ENCODE measurements at regions of chr12 and their contacts with region 1.

Region 1: GRCh38 chr12:53352331-53353256 is 16.4 kb upstream of the SP7 start:
- DNase-seq: peak; percentile 58 to 87 (median 82)
- ATAC-seq: peak; percentile 99
- H3K4me3 ChIP-seq: no peak overlapping the region
- H3K4me3 Mint-ChIP-seq: peak overlapping the region in 2 of 10 donors; percentile 14 to 32
- H3K27ac ChIP-seq: no peak overlapping the region
- H3K27ac Mint-ChIP-seq: peak overlapping the region in 6 of 9 donors; percentile 4 to 52 (median 12)
- H3K4me1 ChIP-seq: peaks cover 0 to 3% of the 10 kb centered on the region in 2 donors
- H3K4me1 Mint-ChIP-seq: peaks cover 5 to 13% (median 6%) of the 10 kb centered on the region in 7 donors
- H3K27me3 ChIP-seq: no peaks in the 10 kb centered on the region
- H3K27me3 Mint-ChIP-seq: no peaks in the 10 kb centered on the region

Region 2: DNA sequence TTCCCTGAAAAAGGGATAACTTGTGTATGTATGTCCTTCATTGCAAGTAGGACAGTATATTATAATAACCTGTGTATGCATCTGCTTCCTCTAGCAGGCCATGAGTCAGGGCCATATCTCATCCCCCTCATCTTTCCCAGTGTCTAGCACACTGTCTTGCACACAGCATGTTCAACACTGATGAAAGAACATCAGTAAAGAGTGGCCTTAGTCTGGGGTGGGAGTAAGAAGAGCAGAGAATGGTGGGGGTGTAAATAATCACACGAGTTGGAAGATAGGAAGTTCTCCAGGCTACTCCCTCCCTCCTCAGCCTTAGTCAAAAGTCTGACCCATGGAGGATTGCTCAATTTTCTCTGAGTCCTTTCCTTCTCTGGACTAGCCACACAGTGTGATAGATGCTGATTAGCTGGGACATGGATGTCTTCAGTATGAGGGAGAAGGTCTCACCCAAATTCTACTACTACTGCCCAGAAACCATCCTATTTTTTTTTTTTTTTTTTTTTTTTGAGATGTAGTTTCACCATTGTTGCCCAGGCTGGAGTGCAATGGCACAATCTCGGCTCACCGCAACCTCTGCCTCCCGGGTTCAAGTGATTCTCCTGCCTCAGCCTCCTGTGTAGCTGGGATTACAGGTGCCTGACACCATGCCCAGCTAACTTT is 12.8 kb after region 1 on chr12:
- CTCF ChIA-PET with region 1: interaction called, 10 read pairs
- POLR2A ChIA-PET with region 1: interaction called, 3 read pairs
- intact Hi-C with region 1: no loop called
- DNase-seq: no peak
- ATAC-seq: peak; percentile 75
- H3K4me3 ChIP-seq: no peak overlapping the region
- H3K4me3 Mint-ChIP-seq: peak overlapping the region in 4 of 10 donors; percentile 0 to 63 (median 34)
- H3K27ac ChIP-seq: no peak overlapping the region
- H3K27ac Mint-ChIP-seq: peak overlapping the region in 7 of 9 donors; percentile 56 to 91 (median 88)
- H3K4me1 ChIP-seq: peaks cover 2 to 3% of the 10 kb centered on the region in 2 donors
- H3K4me1 Mint-ChIP-seq: peaks cover 10 to 17% (median 15%) of the 10 kb centered on the region in 7 donors
- H3K27me3 ChIP-seq: no peaks in the 10 kb centered on the region
- H3K27me3 Mint-ChIP-seq: no peaks in the 10 kb centered on the region

Region 3: DNA sequence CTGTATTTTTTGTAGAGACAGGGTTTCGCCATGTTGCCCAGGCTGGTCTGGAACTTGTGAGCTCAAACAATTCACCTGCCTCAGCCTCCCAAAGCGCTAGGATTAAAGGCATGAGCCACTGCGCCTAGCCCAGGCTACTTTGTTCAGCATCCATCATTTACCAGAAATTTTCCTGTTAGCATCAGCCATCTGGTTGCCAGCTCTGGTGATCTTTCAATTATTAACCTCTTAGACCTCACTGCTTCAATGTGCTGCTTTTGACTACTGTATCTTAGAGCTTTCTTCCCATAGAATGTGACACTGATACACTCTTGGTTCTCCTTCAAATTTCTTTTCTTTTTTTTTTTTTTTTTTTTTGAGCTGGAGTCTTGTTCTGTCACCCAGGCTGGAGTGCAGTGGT is 65.6 kb after region 1 on chr12:
- CTCF ChIA-PET with region 1: interaction called, 75 read pairs
- POLR2A ChIA-PET with region 1: interaction called, 4 read pairs
- intact Hi-C with region 1: loop called (anchors 1 kb)
- DNase-seq: no peak
- ATAC-seq: no peak
- H3K4me3 ChIP-seq: no peak overlapping the region
- H3K4me3 Mint-ChIP-seq: peak overlapping the region in 2 of 10 donors; percentile 14 to 55
- H3K27ac ChIP-seq: no peak overlapping the region
- H3K27ac Mint-ChIP-seq: peak overlapping the region in 6 of 9 donors; percentile 23 to 72 (median 30)
- H3K4me1 ChIP-seq: peaks cover 4 to 7% of the 10 kb centered on the region in 2 donors
- H3K4me1 Mint-ChIP-seq: peaks cover 16 to 64% (median 54%) of the 10 kb centered on the region in 7 donors
- H3K27me3 ChIP-seq: no peaks in the 10 kb centered on the region
- H3K27me3 Mint-ChIP-seq: no peaks in the 10 kb centered on the region

Region 4: GRCh38 chr12:53424626-53425514 is 72.3 kb after region 1 on chr12:
- CTCF ChIA-PET with region 1: interaction called, 75 read pairs
- POLR2A ChIA-PET with region 1: interaction called, 4 read pairs
- intact Hi-C with region 1: loop called (anchors 1 kb)
- DNase-seq: no peak
- ATAC-seq: no peak
- H3K4me3 ChIP-seq: no peak overlapping the region
- H3K4me3 Mint-ChIP-seq: no peak overlapping the region
- H3K27ac ChIP-seq: no peak overlapping the region
- H3K27ac Mint-ChIP-seq: no peak overlapping the region
- H3K4me1 ChIP-seq: peaks cover 3 to 4% of the 10 kb centered on the region in 2 donors
- H3K4me1 Mint-ChIP-seq: peaks cover 4 to 15% (median 6%) of the 10 kb centered on the region in 7 donors
- H3K27me3 ChIP-seq: no peaks in the 10 kb centered on the region
- H3K27me3 Mint-ChIP-seq: no peaks in the 10 kb centered on the region

Region 5: DNA sequence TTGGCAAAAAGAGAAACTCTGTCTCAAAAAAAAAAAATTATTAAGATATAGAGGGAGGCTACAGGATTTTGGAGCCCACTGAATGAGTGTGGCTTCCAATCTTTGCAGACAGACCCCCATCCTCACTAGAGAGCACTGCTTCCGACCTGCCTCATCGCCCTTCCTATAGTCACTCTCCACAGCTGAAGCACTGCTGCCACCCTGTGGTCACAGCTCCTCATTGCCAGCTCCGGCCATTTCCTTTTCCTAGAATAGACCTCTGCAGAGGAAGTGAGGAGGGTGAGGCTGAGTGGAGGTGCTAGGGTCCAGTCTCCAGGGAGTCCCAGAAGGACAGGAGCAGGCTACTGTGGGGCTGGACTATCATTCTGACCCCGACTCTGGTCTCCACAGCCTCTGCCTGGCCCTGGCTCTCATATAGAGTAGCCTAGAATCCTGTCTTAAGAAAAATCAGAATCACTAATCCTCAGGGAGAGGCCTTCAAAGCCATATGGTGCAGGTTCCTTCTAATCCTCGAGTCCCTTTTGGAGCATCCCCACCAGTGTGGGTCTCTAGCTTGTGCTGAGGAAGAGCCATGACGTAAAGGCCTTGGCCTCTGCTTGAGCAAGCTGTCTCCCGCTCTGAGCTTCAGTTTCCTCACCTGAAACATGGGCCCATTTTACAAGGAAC is 156.1 kb after region 1 on chr12:
- CTCF ChIA-PET with region 1: interaction called, 46 read pairs
- POLR2A ChIA-PET with region 1: interaction called, 8 read pairs
- intact Hi-C with region 1: loop called (anchors 1 kb)
- DNase-seq: peak; percentile 63 to 82 (median 73)
- ATAC-seq: peak; percentile 98
- H3K4me3 ChIP-seq: no peak overlapping the region
- H3K4me3 Mint-ChIP-seq: peak overlapping the region in 1 of 10 donors; percentile 39
- H3K27ac ChIP-seq: peak overlapping the region; percentile 39
- H3K27ac Mint-ChIP-seq: peak overlapping the region in 8 of 9 donors; percentile 13 to 80 (median 66)
- H3K4me1 ChIP-seq: peaks cover 6 to 7% of the 10 kb centered on the region in 2 donors
- H3K4me1 Mint-ChIP-seq: peaks cover 5 to 17% (median 9%) of the 10 kb centered on the region in 7 donors
- H3K27me3 ChIP-seq: no peaks in the 10 kb centered on the region
- H3K27me3 Mint-ChIP-seq: no peaks in the 10 kb centered on the region

Region 6: DNA sequence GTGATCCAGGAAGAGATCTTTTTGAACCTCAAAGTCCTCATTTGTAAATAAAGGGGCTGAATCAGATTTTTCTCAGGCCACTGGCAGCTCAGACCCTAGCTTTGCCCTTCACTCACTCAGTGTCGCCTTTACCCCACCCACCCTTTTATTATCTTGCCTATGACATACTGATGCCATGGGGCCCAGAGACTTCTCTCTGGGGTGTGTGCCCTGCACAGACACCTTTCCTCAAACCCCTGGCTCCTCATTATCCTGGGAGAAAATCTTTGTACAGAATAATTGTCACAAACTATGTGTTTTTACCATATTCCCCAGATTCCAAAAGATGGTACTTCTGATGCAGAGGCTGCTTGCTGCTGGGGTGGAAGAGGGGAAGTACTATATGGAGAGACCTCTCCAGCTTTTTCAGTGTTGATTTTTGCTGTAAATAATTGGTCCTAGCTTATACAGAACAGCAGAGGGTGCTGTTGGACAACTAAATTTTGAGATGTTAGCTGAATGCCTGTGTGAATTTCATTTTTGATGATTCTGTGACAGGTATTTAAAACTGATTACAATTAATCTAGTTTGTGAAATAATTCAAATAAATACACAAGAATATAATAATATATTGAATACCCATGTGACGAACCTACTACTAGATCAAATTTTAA is 1349.5 kb after region 1 on chr12:
- CTCF ChIA-PET with region 1: no interaction called
- POLR2A ChIA-PET with region 1: no interaction called
- intact Hi-C with region 1: no loop called
- DNase-seq: peak in 7 of 9 donors; percentile 16 to 67 (median 56)
- ATAC-seq: peak; percentile 81
- H3K4me3 ChIP-seq: no peak overlapping the region
- H3K4me3 Mint-ChIP-seq: no peak overlapping the region
- H3K27ac ChIP-seq: no peak overlapping the region
- H3K27ac Mint-ChIP-seq: no peak overlapping the region
- H3K4me1 ChIP-seq: no peaks in the 10 kb centered on the region
- H3K4me1 Mint-ChIP-seq: no peaks in the 10 kb centered on the region
- H3K27me3 ChIP-seq: no peaks in the 10 kb centered on the region
- H3K27me3 Mint-ChIP-seq: peaks cover 0 to 27% (median 6%) of the 10 kb centered on the region in 5 donors